ENCODE measurements at regions of chr1 and their contacts with region 1.

Region 1: DNA sequence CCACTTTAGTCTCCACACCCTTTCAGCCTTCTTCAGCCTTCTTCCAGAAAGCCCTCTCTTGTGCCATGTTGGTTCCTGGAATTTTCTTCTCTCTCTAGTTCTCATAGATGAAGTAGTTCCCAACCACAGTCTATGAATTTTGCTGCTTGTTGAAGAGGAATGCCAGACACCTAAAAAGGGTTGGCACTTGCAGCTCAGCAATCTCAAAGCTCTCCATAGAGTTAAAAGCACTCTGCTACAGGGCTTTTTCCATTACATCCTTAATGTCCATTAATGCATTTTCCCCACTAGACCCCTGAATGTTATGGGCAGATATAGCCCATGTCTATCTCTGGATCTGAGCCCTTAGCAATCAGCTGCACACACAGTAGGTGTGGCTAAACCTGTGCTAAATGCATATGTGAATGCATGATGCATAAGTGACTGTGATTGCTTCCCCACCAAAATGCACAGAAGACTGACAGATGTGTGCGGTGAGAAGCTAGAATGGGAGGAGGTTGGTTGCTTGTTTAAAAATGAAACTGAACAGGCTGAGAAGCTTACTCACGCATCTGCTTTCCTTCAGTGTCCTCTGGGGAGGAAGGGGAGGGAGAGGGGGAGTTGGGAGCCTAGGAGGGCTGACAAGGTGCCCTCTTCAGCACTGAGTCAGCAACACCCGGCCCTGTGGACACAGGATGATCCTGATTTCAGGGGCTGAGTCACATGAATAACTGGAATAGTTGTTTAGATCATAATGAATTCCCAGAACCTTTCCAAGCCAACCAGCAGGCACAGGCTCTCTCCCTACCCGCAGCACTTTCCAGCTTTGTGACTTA is 146.1 kb upstream of the FGGY start:
- DNase-seq: peak; percentile 84 to 96 (median 94)
- H3K4me3 ChIP-seq: peak overlapping the region in 1 of 4 donors; percentile 32
- H3K27ac ChIP-seq: peak overlapping the region; percentile 66 to 92 (median 75)
- H3K4me1 ChIP-seq: peaks cover 13 to 33% of the 10 kb centered on the region in 2 donors
- H3K27me3 ChIP-seq: no peaks in the 10 kb centered on the region
- CTCF ChIP-seq: no peak
- POLR2A ChIP-seq: peak in 1 of 2 donors; percentile 70

Region 2: DNA sequence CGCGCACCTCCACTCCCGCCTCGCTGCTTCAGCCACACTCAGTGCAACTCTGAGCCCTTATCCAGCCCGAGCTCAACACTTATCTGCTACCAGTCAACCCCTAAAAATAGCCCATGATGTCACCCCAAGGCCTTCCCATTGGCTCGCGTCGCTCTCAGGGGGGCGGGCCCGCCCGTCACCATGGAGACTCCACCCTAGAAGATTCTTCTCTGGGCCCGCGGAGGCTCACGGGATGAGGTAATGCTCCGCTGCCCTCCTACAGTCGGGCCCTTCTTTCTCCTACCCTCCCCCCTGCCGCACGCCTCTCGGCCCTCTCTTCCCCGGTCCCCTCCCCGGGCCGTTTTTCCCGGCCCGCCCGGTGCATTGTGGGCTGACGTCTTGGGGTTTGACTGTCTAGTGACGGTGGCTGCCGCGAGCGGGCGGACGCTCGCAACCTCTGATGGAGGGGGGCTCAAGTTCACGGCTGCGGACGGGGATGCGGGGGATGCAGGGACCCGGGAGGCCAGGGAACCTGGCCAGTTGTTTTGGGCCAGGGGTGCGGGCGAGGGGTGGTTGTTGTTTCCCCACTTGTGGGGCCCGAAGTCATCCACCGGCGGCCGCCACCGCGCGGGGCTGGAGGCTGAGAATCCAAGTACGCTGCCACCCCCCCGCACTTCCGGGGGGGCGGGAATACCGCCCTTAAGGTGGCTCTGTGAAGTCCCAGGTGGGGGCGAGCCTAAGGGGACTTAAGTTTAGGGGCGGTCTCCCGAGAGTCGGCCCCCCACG is 366.6 kb before region 1 on chr1 and contains the start of gene JUN:
- intact Hi-C with region 1: loop called in 1 of 2 experiments (anchors 10 kb)
- DNase-seq: peak; percentile 99 to 100 (median 100)
- H3K4me3 ChIP-seq: peak within 1 kb of the TSS; percentile 62 to 84 (median 78)
- H3K27ac ChIP-seq: peak within 1 kb of the TSS; percentile 99 to 100 (median 99)
- H3K4me1 ChIP-seq: peaks cover 12 to 36% of the 10 kb centered on the region in 2 donors
- H3K27me3 ChIP-seq: no peaks in the 10 kb centered on the region
- CTCF ChIP-seq: peak in 1 of 6 experiments; percentile 17
- POLR2A ChIP-seq: peak; percentile 94 to 100
- total RNA-seq, gene JUN: 29.4 to 250 (median 61.0) TPM

Region 3: GRCh38 chr1:59296358-59297256 is 145.8 kb after region 1 on chr1 and contains the start of gene FGGY:
- intact Hi-C with region 1: loop called in 1 of 2 experiments (anchors 10 kb)
- DNase-seq: peak; percentile 96 to 99 (median 99)
- H3K4me3 ChIP-seq: peak within 1 kb of the TSS in 3 of 4 donors; percentile 50 to 66 (median 59)
- H3K27ac ChIP-seq: peak within 1 kb of the TSS; percentile 80 to 98 (median 93)
- H3K4me1 ChIP-seq: peaks cover 22 to 44% of the 10 kb centered on the region in 2 donors
- H3K27me3 ChIP-seq: no peaks in the 10 kb centered on the region
- CTCF ChIP-seq: peak in 2 of 6 experiments; percentile 10 to 12
- POLR2A ChIP-seq: peak; percentile 89 to 94
- total RNA-seq, gene FGGY: 26.1 to 75.5 (median 38.4) TPM

Measured in adrenal gland (tissue), 19 donors.